Right ventricle myocardium superior (tissue), 1 donor: ENCODE measurements at regions of chr9 and their contacts with region 1.

Region 1: GRCh38 chr9:14314929-14315645 is 1.1 kb upstream of the NFIB start:
- DNase-seq: peak; percentile 97
- ATAC-seq: peak; percentile 83

Region 2: GRCh38 chr9:14030375-14031059 is 284.6 kb before region 1 on chr9:
- intact Hi-C with region 1: loop called (anchors 10 kb)
- DNase-seq: no peak
- ATAC-seq: peak; percentile 68

Region 3: DNA sequence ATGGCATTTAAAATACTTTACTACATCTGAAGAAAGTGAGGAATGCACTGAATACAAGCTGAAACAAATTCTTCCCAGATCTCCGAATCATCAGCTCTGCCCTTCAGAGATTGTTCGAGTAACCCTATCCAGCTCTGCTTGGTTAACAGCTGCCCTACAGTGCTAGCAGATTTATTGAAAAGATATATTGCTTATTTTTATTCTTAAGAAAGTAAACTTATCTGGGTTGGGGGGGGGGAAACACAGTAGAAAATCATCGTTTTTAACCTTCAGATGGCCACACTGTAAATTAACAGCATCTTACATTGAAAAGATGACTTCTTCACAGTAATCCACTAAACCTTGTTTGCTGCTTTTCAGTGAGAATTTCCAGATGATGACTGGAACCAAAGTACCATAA is 212.0 kb before region 1 on chr9:
- intact Hi-C with region 1: loop called (anchors 5 kb)
- DNase-seq: no peak
- ATAC-seq: no peak

Region 4: DNA sequence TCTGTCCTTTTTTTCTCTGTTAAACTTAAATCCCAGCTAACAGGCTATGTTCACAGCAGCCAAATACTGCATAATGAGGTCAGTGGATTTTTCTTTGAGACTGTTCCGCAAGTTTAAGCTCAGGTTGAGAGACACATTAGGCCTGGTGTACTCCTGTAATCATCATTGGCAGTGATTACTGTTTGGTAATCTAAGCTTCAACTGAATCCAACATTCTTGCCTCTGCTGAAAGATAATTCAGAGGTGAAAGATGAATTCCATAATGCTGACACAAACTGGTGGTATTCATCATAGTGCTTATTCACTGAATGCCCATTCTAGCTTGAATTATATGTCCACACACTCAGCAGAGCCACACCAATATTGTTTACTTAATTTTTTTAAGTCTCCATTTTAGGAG is 109.6 kb before region 1 on chr9:
- intact Hi-C with region 1: loop called (anchors 5 kb)
- DNase-seq: no peak
- ATAC-seq: peak; percentile 59

Region 5: DNA sequence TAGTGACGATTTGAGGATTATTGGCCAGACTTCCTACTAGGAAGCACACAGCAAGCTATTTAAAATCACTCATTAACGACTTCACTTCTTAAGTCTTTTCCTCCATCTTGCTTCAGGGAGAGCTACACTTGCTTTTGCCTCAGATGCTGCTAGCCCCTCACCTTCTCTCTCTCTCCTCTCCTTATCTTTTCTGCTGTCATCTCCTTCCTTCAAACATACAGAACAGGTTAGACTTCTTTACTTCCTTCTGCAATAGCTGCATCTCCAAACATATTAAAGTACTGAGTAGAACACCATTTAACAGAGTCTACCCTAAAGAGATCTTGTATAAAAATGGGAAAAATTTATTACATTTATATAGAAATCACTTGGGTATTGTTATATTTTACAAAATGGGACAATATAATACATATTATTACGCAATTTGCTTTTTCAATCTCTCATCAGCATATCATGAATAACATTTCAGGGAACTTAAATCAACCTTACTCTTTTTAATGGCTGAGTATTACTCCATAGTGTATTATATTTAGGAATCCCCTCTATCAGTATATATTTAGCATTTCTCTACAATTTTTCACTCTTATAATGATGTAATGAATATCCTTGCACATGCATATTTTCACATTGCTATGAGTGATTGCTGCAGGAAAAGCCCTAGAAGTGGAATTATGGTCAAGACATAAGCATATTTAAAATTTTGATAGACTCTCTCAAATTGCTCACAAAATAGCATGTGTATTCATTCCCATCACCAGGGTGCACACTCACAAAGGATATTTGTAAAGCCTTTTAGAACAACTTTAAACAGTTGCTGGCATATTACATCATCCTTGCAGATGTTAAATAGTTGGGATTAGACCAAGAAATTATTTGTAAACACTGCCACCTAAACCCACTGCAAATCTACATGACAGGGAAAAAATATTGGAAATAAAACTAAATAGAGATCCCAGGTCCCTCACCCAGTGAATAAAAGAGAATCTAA is 163.4 kb after region 1 on chr9:
- intact Hi-C with region 1: no loop called
- DNase-seq: no peak
- ATAC-seq: no peak